B cell (primary cell): ENCODE measurements at regions of chr11 and their contacts with region 1.

Region 1: DNA sequence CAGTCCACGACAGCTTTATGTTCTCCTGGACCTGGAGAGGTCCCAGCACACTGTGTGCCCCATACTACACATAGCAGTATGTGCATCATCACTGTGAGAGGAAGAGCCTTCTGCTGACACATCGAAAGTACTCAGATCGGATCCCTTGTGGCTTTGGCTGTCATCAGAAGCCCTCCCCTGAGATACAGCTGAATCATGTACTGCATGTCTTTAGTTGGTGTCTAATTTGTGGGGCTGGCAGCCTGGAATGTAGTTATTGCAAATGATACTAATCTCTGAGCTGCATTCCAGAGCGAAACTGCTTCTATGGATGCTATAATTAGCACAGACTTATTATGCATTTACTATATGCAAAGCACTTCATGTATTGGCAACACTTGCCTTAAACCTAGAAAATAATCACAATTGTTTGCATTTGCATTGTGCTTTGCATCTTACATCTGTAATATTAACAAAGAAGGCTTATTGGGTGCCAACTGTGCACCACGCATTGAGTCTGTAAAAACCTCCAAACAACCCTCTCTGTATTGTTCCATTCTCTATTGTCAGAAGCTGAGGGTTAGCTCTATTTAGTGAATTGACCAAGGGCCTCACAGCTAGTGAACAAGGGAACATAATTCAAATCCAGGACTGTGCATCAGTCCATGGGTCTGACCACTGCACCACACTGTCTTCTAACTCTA is 89.2 kb upstream of the CRTAM start:
- DNase-seq: peak; percentile 56
- ATAC-seq: peak; percentile 59
- H3K4me3 ChIP-seq: no peak overlapping the region
- H3K4me3 Mint-ChIP-seq: no peak overlapping the region
- H3K27ac ChIP-seq: no peak overlapping the region
- H3K27ac Mint-ChIP-seq: no peak overlapping the region
- H3K4me1 ChIP-seq: peaks cover 40 to 53% of the 10 kb centered on the region in 2 donors
- H3K4me1 Mint-ChIP-seq: peaks cover 18% of the 10 kb centered on the region
- H3K27me3 ChIP-seq: peaks cover 0 to 35% (median 7%) of the 10 kb centered on the region in 4 experiments
- H3K27me3 Mint-ChIP-seq: peaks cover 20% of the 10 kb centered on the region
- CTCF ChIP-seq: no peak

Region 2: DNA sequence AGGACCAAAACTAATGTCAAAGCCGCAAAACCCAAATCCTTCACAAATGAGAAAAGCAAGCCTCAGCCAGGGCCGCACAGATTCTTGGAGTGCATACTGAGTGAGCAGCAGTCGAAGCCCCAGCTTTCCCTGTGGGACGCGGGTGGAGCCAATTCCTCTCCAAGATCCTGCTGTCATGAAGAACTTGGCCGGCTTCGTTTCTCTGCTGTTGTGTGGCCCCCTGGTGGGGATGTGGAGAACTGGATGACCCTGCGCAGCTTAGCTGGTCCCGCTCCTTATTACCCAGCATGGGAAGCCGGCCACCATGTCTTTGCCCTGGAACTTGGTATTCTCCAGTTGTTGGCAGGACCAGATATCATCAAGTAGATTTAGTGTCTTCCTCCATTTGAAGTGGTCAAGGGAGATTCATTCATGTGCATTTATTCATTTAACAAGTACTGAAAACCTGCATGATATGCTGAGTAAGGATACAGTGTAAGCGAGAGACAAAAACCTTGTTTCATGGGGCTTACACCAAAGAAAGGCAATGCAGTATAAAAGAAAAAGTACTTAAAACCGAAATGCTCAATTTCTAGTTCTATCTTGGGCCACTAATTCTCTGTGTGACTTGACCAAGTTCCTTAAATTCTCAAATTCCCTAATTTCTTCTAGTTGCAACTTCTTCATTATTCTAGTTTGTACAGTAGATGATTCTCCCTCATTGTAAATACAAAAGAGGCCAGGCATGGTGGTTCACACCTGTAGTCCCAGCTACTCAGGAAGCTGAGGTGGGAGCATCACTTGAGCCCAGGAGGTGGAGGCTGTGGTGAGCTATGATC is 32.4 kb after region 1 on chr11:
- CTCF ChIA-PET with region 1: interaction called, 109 read pairs
- POLR2A ChIA-PET with region 1: no interaction called
- intact Hi-C with region 1: no loop called
- DNase-seq: peak; percentile 78
- ATAC-seq: peak; percentile 90
- H3K4me3 ChIP-seq: no peak overlapping the region
- H3K4me3 Mint-ChIP-seq: no peak overlapping the region
- H3K27ac ChIP-seq: no peak overlapping the region
- H3K27ac Mint-ChIP-seq: no peak overlapping the region
- H3K4me1 ChIP-seq: no peaks in the 10 kb centered on the region
- H3K4me1 Mint-ChIP-seq: no peaks in the 10 kb centered on the region
- H3K27me3 ChIP-seq: no peaks in the 10 kb centered on the region
- H3K27me3 Mint-ChIP-seq: no peaks in the 10 kb centered on the region
- CTCF ChIP-seq: peak; percentile 93

Region 3: GRCh38 chr11:122832721-122833470 is 83.8 kb after region 1 on chr11:
- CTCF ChIA-PET with region 1: no interaction called
- POLR2A ChIA-PET with region 1: no interaction called
- intact Hi-C with region 1: loop called (anchors 5 kb)
- DNase-seq: peak; percentile 51
- ATAC-seq: peak; percentile 33
- H3K4me3 ChIP-seq: no peak overlapping the region
- H3K4me3 Mint-ChIP-seq: peak overlapping the region; percentile 33
- H3K27ac ChIP-seq: no peak overlapping the region
- H3K27ac Mint-ChIP-seq: no peak overlapping the region
- H3K4me1 ChIP-seq: peaks cover 15 to 24% of the 10 kb centered on the region in 2 donors
- H3K4me1 Mint-ChIP-seq: peaks cover 20% of the 10 kb centered on the region
- H3K27me3 ChIP-seq: peaks cover 0 to 28% (median 1%) of the 10 kb centered on the region in 4 experiments
- H3K27me3 Mint-ChIP-seq: peaks cover 14% of the 10 kb centered on the region
- CTCF ChIP-seq: no peak